Common myeloid progenitor, CD34-positive (primary cell): ENCODE measurements at regions of chr20 and their contacts with region 1.

Region 1: GRCh38 chr20:35502352-35502751 is 27.1 kb downstream of the C20orf173 start:
- DNase-seq: peak; percentile 31 to 60 (median 58)
- H3K4me3 ChIP-seq: no peak overlapping the region
- H3K27ac ChIP-seq: no peak overlapping the region
- H3K4me1 ChIP-seq: peaks cover 0 to 11% (median 2%) of the 10 kb centered on the region in 4 experiments
- H3K27me3 ChIP-seq: no peaks in the 10 kb centered on the region

Region 2: GRCh38 chr20:35463455-35464300 is 38.7 kb before region 1 on chr20:
- CTCF ChIA-PET with region 1: interaction called, 35 read pairs
- POLR2A ChIA-PET with region 1: no interaction called
- DNase-seq: peak; percentile 71 to 82 (median 71)
- H3K4me3 ChIP-seq: no peak overlapping the region
- H3K27ac ChIP-seq: no peak overlapping the region
- H3K4me1 ChIP-seq: peaks cover 0 to 3% (median 0%) of the 10 kb centered on the region in 4 experiments
- H3K27me3 ChIP-seq: no peaks in the 10 kb centered on the region